A673 (cell line): ENCODE measurements at regions of chr2 and their contacts with region 1.

Region 1: DNA sequence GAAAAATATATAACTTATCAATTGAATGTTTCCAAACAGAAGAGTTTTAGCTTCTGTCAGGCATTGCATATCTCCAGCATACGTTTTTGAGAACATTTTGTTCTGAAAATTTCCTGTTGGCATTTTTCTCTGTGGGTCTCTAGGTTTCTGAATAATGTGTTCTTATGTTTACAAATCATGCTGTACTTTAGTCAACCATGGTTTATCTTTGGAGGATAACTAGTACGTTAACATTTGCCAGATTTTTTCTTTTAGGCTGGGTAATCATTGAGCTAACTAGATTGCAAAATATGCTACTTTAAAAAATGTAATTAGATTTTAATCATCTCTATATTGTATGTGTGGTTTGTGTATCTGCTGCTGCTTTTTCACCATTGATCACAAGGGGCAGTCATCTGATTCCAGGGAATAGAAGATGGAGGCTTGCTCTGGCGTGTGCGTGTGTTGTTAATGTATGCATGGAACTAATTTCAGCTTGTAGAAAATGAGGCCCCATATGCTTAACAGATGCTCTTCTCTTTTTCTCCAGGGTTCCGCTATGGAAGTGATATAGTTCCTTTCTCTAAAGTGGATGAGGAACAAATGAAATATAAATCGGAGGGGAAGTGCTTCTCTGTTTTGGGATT is 21.3 kb downstream of the XRCC5 start:
- DNase-seq: no peak
- H3K4me3 ChIP-seq: no peak overlapping the region
- H3K27ac ChIP-seq: no peak overlapping the region
- H3K4me1 ChIP-seq: no peaks in the 10 kb centered on the region
- H3K27me3 ChIP-seq: no peaks in the 10 kb centered on the region
- CTCF ChIP-seq: 0 out of 2 replicates have a peak, but pooled peaks have one; percentile 21

Region 2: GRCh38 chr2:215338883-215339679 is 791.4 kb before region 1 on chr2:
- CTCF ChIA-PET with region 1: no interaction called
- POLR2A ChIA-PET with region 1: no interaction called
- intact Hi-C with region 1: no loop called
- DNase-seq: no peak
- H3K4me3 ChIP-seq: no peak overlapping the region
- H3K27ac ChIP-seq: no peak overlapping the region
- H3K4me1 ChIP-seq: no peaks in the 10 kb centered on the region
- H3K27me3 ChIP-seq: no peaks in the 10 kb centered on the region
- CTCF ChIP-seq: no peak

Region 3: DNA sequence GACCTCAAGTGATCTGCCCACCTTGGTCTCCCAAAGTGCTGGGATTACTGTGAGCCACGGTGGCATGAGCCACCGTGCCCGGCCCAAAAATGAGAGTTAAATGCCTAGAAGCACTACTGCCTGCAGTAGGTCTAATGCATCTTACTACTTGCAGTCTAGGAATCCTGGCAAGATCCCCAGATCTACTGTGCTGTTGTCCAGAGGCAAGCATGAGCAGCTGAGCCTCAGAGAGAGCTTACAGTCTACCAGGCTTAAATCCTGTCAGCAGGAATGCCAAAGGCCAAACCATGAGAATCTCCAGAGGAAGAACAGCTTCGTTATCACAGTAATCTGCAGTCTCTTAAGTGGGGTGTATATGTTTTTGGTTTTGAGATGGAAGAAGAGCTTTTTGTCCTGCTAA is 33.1 kb after region 1 on chr2:
- CTCF ChIA-PET with region 1: no interaction called
- POLR2A ChIA-PET with region 1: no interaction called
- intact Hi-C with region 1: loop called (anchors 5 kb)
- DNase-seq: no peak
- H3K4me3 ChIP-seq: no peak overlapping the region
- H3K27ac ChIP-seq: no peak overlapping the region
- H3K4me1 ChIP-seq: peaks cover 14% of the 10 kb centered on the region
- H3K27me3 ChIP-seq: no peaks in the 10 kb centered on the region
- CTCF ChIP-seq: no peak